ENCODE measurements at regions of chr17 and their contacts with region 1.

Region 1: GRCh38 chr17:41548844-41549595 is 20.9 kb upstream of the KRT19 start:
- DNase-seq: peak; percentile 85
- H3K4me3 ChIP-seq: peak overlapping the region in 3 of 4 donors; percentile 5 to 33 (median 30)
- H3K27ac ChIP-seq: peak overlapping the region in 3 of 4 donors; percentile 54 to 65 (median 56)
- H3K4me1 ChIP-seq: peaks cover 0 to 30% (median 23%) of the 10 kb centered on the region in 4 donors
- H3K27me3 ChIP-seq: no peaks in the 10 kb centered on the region
- CTCF ChIP-seq: peak; percentile 59 to 91 (median 81)
- EP300 ChIP-seq: no peak
- POLR2A ChIP-seq: no peak

Region 2: GRCh38 chr17:40803617-40804082 is 745.4 kb before region 1 on chr17:
- intact Hi-C with region 1: loop called (anchors 5 kb)
- DNase-seq: peak; percentile 75
- H3K4me3 ChIP-seq: no peak overlapping the region
- H3K27ac ChIP-seq: no peak overlapping the region
- H3K4me1 ChIP-seq: no peaks in the 10 kb centered on the region
- H3K27me3 ChIP-seq: peaks cover 0 to 39% (median 3%) of the 10 kb centered on the region in 3 donors
- CTCF ChIP-seq: peak; percentile 40 to 66 (median 48)
- EP300 ChIP-seq: no peak
- POLR2A ChIP-seq: no peak

Region 3: GRCh38 chr17:41613277-41614082 is 64.5 kb after region 1 on chr17:
- intact Hi-C with region 1: no loop called
- DNase-seq: peak; percentile 46
- H3K4me3 ChIP-seq: no peak overlapping the region
- H3K27ac ChIP-seq: no peak overlapping the region
- H3K4me1 ChIP-seq: no peaks in the 10 kb centered on the region
- H3K27me3 ChIP-seq: peaks cover 0 to 17% (median 0%) of the 10 kb centered on the region in 3 donors
- CTCF ChIP-seq: no peak
- EP300 ChIP-seq: no peak
- POLR2A ChIP-seq: no peak

Region 4: GRCh38 chr17:41648411-41649195 is 99.6 kb after region 1 on chr17:
- intact Hi-C with region 1: loop called (anchors 1 kb)
- DNase-seq: peak; percentile 92
- H3K4me3 ChIP-seq: peak overlapping the region; percentile 1 to 46 (median 36)
- H3K27ac ChIP-seq: peak overlapping the region; percentile 30 to 59 (median 49)
- H3K4me1 ChIP-seq: peaks cover 0 to 26% (median 14%) of the 10 kb centered on the region in 4 donors
- H3K27me3 ChIP-seq: no peaks in the 10 kb centered on the region
- CTCF ChIP-seq: peak; percentile 82 to 97 (median 92)
- EP300 ChIP-seq: no peak
- POLR2A ChIP-seq: no peak

Measured in sigmoid colon (tissue), 7 donors.